AG04449 (cell line): ENCODE measurements at regions of chr12 and their contacts with region 1.

Region 1: DNA sequence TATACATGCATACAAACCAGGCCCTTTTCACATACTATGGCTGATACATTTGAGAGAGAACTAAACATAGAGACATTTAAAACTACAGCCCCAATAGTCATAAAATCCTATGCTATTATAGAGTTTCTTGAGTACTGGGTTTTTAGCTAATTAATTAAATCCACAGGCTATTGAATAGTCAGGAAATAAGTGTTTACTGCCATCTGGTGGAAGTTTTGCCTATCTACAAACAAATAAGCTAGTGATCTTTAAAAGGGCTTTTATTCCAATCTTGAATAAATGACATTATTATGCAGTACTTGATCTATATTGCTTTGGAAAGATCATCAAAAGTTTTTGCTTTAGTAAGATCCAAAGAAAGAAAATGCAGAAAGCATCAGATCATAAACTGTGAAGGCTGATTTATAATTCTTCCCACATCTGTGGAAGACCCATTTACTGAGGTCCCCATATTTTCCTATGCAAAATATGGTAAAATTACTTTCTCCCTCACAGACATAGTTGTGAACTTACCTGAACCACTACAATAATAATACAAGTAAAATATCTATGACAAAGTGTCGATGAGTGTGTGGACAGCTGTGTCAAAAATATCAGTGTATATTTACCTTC is 131.3 kb downstream of the ITPR2 start:
- DNase-seq: no peak
- H3K4me3 ChIP-seq: no peak overlapping the region
- CTCF ChIP-seq: peak; percentile 26

Region 2: DNA sequence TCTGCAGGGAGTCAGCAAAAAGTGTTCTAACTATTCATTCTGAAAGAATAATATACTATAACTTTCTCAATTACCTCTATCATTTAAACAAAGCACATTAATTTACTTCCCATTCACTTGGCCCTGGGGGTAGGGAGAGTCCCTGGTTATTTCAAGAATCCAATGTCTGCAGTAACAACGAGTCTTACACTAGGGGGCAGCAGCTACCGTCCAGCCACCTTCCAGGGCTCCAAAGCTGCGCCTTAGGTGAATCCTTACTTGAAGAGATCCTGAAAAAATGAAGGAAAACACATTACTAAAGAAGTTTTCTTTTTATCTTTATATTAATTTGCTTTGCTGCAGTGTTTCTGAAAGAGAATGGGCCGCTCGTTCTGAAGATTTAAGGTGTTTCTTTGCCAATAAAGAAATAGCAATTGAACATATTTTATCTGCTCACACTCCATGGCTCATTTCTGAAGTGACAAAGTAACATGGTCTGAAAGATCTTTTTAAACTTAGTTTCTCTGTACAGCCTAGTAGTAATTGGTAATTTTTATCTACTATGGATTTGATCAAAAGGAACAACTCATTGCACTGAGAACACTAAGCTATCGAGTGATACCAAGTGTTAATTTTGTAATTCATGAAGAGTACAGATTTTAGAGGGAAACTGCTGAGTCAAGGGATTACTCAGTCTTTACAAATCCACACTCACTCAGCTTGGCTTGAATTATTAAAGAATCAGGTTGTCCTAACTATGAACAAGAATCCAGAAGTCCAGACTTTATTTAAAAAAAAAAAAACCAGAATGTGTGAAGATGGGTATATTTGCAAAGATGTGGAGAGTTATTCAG is 604.4 kb before region 1 on chr12:
- CTCF ChIA-PET with region 1: interaction called, 19 read pairs
- POLR2A ChIA-PET with region 1: no interaction called
- DNase-seq: no peak
- H3K4me3 ChIP-seq: no peak overlapping the region
- CTCF ChIP-seq: peak; percentile 86

Region 3: DNA sequence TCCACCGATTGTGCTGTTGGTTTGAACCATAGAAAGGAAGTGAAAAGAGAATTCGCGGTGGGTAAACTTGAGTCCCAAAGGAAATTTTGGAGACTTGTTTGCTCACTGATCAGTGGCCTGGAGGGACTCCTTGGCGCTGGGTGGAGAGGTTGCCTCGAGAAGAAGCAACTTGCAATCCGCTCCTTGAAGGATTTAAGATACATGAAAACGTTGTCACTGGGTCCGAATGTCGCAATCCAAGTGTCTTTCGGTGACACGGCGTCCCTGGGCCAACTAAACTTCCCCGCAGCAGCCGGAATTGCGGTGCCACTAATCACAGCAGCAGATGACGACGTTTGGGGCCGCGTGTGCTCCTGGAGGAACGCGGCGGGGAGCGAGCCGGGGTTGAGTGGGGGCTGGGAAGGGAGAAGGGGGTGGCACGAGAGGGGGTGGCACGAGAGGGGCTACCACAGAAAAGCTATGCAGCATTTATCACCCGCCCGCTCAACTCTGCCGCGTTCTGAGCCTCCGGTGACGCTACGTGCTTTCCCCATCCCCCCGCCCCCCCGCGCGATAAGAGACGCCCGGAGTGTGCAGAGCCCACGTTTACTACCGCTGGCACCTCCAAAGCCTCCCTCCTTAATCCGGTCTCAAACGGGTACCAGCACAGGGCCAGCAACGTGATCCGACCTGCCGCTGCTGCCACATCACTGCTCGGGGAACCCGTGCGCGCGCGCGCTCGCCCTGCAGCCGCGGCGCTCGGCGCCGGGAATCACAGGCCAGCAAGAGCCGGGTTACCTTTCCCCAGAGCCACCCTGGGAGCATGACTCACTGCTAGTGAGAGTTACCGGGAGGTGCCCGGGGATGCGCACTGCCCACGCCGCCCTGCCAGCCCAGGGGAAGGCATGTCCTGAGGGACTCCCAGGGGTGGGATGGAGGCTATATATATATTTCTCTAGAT is 576.0 kb before region 1 on chr12:
- CTCF ChIA-PET with region 1: interaction called, 14 read pairs
- POLR2A ChIA-PET with region 1: no interaction called
- DNase-seq: peak; percentile 24
- H3K4me3 ChIP-seq: peak overlapping the region; percentile 69
- CTCF ChIP-seq: no peak

Region 4: DNA sequence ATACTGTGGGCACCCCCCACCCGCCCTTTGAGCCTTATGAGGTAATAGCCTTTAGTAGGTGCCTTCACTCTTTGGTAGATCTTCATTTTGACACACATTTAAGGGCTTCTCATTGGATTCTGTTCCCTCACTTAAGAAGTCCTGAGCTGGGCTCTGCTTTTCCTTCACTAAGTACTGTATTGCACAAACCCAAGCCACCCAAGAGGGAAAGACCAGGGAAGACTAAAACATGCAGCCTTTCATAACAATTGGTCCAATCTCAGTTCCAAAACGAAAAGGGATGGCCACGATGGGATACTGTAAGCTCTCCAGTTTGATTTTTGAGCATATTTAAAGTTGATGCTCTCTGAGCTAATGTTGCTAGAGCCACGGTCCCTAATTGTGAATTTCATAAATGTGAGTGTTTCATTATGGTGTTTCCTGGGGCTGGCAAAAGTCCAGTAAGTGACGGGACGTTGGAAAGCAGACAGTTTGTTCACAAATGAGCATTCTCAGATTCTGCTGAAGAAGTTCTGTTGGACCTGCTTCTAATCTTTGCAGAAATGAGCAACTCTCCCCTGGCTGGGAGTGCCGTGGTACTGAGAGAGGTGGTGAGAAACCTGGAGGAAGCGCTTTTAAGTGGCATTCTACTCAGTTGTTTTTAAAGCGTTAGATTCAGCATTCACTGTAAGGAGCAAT is 497.0 kb before region 1 on chr12:
- CTCF ChIA-PET with region 1: no interaction called
- POLR2A ChIA-PET with region 1: no interaction called
- DNase-seq: no peak
- H3K4me3 ChIP-seq: no peak overlapping the region
- CTCF ChIP-seq: no peak

Region 5: DNA sequence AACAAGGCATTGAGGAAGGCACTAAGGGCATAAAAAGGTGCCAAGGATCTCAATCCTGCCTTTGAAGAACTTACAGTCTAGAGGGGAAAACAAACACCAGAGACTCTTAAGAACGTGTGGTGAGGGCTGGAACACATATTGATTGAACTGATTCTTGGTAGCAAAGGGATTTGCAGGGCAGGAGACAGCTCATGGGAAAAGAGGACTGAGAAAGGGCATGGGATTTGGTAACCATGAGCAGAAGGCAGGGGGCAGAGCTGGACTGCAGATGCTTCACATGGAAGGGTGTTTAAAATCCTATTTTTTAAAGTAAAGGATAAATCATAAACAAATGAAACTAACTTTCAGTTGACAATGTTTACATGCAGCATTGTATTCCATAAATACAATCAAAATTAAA is 71.8 kb before region 1 on chr12:
- CTCF ChIA-PET with region 1: interaction called, 43 read pairs
- POLR2A ChIA-PET with region 1: no interaction called
- DNase-seq: no peak
- H3K4me3 ChIP-seq: peak overlapping the region; percentile 4
- CTCF ChIP-seq: peak; percentile 39

Region 6: DNA sequence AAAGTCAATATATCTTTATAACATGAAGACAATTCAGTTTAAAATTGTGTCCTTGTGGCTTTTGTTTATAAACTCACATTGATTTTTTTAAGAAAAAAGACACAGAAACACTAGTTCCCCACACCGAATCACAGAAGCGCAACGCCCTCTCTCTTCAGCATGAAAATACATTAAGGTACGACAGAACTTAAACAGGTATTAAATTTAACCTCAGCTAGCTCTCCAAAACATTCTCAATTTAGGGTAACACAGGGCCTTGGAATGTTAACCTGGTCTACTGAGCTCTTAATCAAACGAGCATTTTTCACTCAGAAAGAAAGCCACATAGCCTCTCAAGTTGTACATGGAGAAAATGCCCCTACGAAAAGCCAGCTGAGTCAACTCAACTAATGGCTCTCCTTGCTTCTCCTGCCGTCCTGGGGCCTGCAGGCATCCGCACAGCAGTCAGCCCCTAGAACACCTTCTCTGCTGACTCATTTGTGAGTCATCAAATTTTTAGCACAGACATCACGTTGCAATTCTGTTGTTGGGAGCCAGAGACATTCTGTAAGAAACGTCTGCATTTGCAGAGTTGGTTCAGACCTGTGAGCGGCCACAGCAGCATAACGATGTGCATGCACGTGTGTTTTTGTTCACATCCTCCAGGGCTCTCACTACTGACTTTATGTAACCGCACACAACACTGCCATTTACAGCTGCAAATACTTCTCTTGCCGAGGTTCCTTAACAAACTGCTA is 10.3 kb before region 1 on chr12:
- CTCF ChIA-PET with region 1: interaction called, 17 read pairs
- POLR2A ChIA-PET with region 1: no interaction called
- DNase-seq: peak; percentile 86
- H3K4me3 ChIP-seq: no peak overlapping the region
- CTCF ChIP-seq: no peak